GM13976 (cell line): ENCODE measurements at regions of chr3 and their contacts with region 1.

Region 1: DNA sequence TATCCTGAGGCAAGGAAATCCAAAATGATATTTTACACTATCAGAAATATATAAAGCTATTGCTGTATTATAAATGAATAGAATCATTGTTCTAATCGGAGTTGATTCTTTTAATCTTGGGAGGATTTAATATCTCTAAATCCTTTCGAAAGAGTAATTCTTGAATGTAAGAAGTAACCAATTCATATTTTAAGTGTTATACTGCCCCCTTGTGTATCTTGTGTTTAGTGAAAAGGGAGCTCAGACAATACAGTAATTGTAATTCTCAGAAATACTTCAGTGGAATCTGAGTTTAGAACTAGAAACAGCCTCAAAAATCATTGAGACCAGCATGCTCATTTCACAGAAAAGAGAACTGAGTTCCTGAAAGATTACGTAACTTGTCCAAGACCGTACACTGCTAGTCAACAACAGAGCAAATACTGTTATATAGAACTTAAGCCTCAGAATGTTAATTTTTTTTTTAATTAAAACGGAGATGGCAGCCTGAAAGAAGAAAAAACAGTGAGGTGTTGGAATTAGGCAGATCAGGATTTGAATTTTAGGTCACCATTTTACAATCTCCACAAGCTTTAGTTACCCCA is 42.9 kb downstream of the PLCH1 start:
- DNase-seq: peak; percentile 37
- CTCF ChIP-seq: peak; percentile 43

Region 2: GRCh38 chr3:154766765-154767503 is 935.0 kb before region 1 on chr3:
- in situ Hi-C with region 1: no loop called
- DNase-seq: no peak
- CTCF ChIP-seq: no peak

Region 3: DNA sequence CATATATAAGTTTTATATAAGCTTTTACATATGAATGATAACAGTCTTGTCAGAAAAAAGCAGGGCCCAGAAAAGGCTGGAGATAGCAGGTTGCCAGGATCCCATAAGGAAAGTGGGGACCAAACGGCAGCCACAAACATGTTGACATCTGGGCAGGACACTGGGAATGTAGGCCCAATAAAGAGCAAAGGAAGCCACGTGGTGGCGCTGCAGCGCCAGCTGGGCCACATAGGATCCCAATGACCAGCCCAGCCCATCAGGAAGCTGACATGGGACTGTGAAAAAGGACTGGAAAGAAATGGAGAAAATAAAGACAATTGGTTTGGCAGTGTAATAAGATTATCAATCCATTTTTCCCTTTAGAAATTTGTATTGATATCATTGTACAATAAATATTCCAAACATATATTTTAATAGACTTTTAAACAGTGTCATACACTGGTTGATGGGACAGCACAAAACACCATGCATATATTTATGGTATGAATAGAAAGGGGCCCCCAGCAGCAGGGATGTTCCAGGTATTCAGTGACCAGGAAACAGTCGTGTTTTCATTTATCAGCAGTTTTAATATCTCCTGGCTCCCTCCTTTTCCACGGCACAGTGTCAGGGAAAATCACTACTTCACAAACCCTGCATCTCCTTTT is 319.5 kb before region 1 on chr3:
- in situ Hi-C with region 1: loop called (anchors 25 kb)
- DNase-seq: peak; percentile 28
- CTCF ChIP-seq: peak; percentile 40